A549 (cell line): ENCODE measurements at regions of chr6 and their contacts with region 1.

Region 1: GRCh38 chr6:169292338-169293124 is 38.9 kb upstream of the THBS2 start:
- DNase-seq: peak; percentile 70 to 91
- ATAC-seq: peak; percentile 90 to 96
- H3K4me3 ChIP-seq: no peak overlapping the region
- H3K27ac ChIP-seq: peak overlapping the region; percentile 98
- H3K4me1 ChIP-seq: peaks cover 26% of the 10 kb centered on the region
- CTCF ChIP-seq: no peak
- EP300 ChIP-seq: peak; percentile 84 to 93; a peak in 3 of 5 replicates
- POLR2A ChIP-seq: no peak
- RAD21 ChIP-seq: peak; percentile 1 to 58; a peak in 4 of 5 replicates

Region 2: GRCh38 chr6:169212897-169213813 is 79.4 kb before region 1 on chr6:
- CTCF ChIA-PET with region 1: no interaction called
- POLR2A ChIA-PET with region 1: interaction called, 14 read pairs
- DNase-seq: peak; percentile 81 to 87
- ATAC-seq: peak; percentile 94 to 99
- H3K4me3 ChIP-seq: peak overlapping the region; percentile 40
- H3K27ac ChIP-seq: peak overlapping the region; percentile 90 to 99
- H3K4me1 ChIP-seq: peaks cover 23% of the 10 kb centered on the region
- CTCF ChIP-seq: no peak
- EP300 ChIP-seq: no peak
- POLR2A ChIP-seq: peak; percentile 51
- RAD21 ChIP-seq: peak; percentile 14 to 35; a peak in 2 of 5 replicates

Region 3: GRCh38 chr6:169345146-169345545 is 52.6 kb after region 1 on chr6:
- CTCF ChIA-PET with region 1: no interaction called
- POLR2A ChIA-PET with region 1: no interaction called
- DNase-seq: no peak
- ATAC-seq: no peak
- H3K4me3 ChIP-seq: no peak overlapping the region
- H3K27ac ChIP-seq: no peak overlapping the region
- H3K4me1 ChIP-seq: peaks cover 7% of the 10 kb centered on the region
- CTCF ChIP-seq: no peak
- EP300 ChIP-seq: no peak
- POLR2A ChIP-seq: no peak
- RAD21 ChIP-seq: no peak